Caco-2 (cell line): ENCODE measurements at regions of chr2 and their contacts with region 1.

Region 1: DNA sequence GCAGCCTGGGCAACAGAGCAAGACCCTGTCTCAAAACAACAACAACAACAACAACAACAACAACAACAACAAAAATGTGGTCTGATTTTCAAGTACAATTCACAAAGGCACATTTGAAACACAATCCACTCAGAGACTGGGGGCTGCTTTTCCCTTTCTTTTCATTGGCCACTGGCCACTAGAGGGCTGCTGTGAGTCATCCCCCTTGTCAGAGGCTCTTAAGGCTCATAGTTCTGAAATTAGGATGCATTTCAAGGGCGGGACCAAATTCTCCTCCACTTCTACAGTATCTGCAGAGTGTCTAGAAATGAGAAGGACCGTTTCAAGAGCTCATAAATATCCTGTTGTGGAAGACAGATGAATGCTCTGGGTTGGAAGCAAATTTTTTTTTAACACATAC is 285.4 kb downstream of the NRXN1 start:
- DNase-seq: peak; percentile 39 to 52
- H3K4me3 ChIP-seq: no peak overlapping the region
- H3K4me3 Mint-ChIP-seq: no peak overlapping the region
- H3K27ac Mint-ChIP-seq: no peak overlapping the region
- H3K4me1 ChIP-seq: no peaks in the 10 kb centered on the region
- H3K4me1 Mint-ChIP-seq: no peaks in the 10 kb centered on the region
- H3K27me3 ChIP-seq: no peaks in the 10 kb centered on the region
- H3K27me3 Mint-ChIP-seq: no peaks in the 10 kb centered on the region
- CTCF ChIP-seq: peak; percentile 60 to 85

Region 2: GRCh38 chr2:50535971-50536759 is 210.4 kb before region 1 on chr2:
- CTCF ChIA-PET with region 1: interaction called, 3 read pairs
- POLR2A ChIA-PET with region 1: no interaction called
- intact Hi-C with region 1: loop called (anchors 5 kb)
- DNase-seq: peak in 1 of 2 experiments; percentile 19
- H3K4me3 ChIP-seq: no peak overlapping the region
- H3K4me3 Mint-ChIP-seq: no peak overlapping the region
- H3K27ac Mint-ChIP-seq: no peak overlapping the region
- H3K4me1 ChIP-seq: no peaks in the 10 kb centered on the region
- H3K4me1 Mint-ChIP-seq: no peaks in the 10 kb centered on the region
- H3K27me3 ChIP-seq: no peaks in the 10 kb centered on the region
- H3K27me3 Mint-ChIP-seq: peaks cover 3% of the 10 kb centered on the region
- CTCF ChIP-seq: peak; percentile 31 to 57

Region 3: DNA sequence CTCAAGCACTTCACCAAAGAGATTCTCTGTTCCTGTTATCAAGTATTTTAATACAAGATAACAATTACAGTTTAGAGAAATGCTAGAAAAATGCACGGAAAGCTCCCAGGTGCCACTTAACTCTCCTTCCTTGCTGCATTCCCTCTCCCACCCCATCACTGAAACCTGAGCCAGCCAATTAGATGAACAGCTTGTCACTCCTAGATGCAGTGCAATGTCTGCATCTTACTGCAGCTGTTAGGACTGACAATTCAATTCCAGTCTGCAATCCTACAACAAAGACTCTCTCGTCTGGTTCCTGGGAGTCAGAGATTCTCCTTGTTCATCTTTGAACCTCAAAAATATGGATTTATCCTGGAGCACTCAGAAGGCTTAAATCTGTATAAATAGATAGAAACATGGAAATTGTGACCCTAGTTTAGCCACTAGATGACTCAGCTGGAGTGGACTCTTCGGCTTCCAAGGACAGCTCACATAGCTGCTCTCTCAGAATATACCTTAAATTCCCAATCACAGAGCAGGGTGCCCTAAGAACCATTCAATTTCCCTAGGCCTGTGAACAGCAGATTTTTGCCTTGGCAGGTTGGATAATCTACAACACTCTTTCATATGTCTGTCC is 25.7 kb before region 1 on chr2:
- CTCF ChIA-PET with region 1: no interaction called
- POLR2A ChIA-PET with region 1: no interaction called
- intact Hi-C with region 1: loop called (anchors 1 kb)
- DNase-seq: peak in 1 of 2 experiments; percentile 11
- H3K4me3 ChIP-seq: no peak overlapping the region
- H3K4me3 Mint-ChIP-seq: peak overlapping the region; percentile 56
- H3K27ac Mint-ChIP-seq: peak overlapping the region; percentile 83
- H3K4me1 ChIP-seq: peaks cover 22% of the 10 kb centered on the region
- H3K4me1 Mint-ChIP-seq: peaks cover 23% of the 10 kb centered on the region
- H3K27me3 ChIP-seq: no peaks in the 10 kb centered on the region
- H3K27me3 Mint-ChIP-seq: no peaks in the 10 kb centered on the region
- CTCF ChIP-seq: no peak

Region 4: GRCh38 chr2:50872543-50872942 is 126.0 kb after region 1 on chr2:
- CTCF ChIA-PET with region 1: no interaction called
- POLR2A ChIA-PET with region 1: no interaction called
- intact Hi-C with region 1: loop called (anchors 2 kb)
- DNase-seq: no peak
- H3K4me3 ChIP-seq: no peak overlapping the region
- H3K4me3 Mint-ChIP-seq: no peak overlapping the region
- H3K27ac Mint-ChIP-seq: no peak overlapping the region
- H3K4me1 ChIP-seq: no peaks in the 10 kb centered on the region
- H3K4me1 Mint-ChIP-seq: no peaks in the 10 kb centered on the region
- H3K27me3 ChIP-seq: no peaks in the 10 kb centered on the region
- H3K27me3 Mint-ChIP-seq: peaks cover 3% of the 10 kb centered on the region
- CTCF ChIP-seq: peak; percentile 20 to 61

Region 5: GRCh38 chr2:50995610-50996009 is 249.1 kb after region 1 on chr2:
- CTCF ChIA-PET with region 1: no interaction called
- POLR2A ChIA-PET with region 1: no interaction called
- intact Hi-C with region 1: loop called (anchors 10 kb)
- DNase-seq: no peak
- H3K4me3 ChIP-seq: no peak overlapping the region
- H3K4me3 Mint-ChIP-seq: no peak overlapping the region
- H3K27ac Mint-ChIP-seq: no peak overlapping the region
- H3K4me1 ChIP-seq: no peaks in the 10 kb centered on the region
- H3K4me1 Mint-ChIP-seq: no peaks in the 10 kb centered on the region
- H3K27me3 ChIP-seq: no peaks in the 10 kb centered on the region
- H3K27me3 Mint-ChIP-seq: peaks cover 2% of the 10 kb centered on the region
- CTCF ChIP-seq: no peak

Region 6: GRCh38 chr2:51247252-51247805 is 500.8 kb after region 1 on chr2:
- CTCF ChIA-PET with region 1: no interaction called
- POLR2A ChIA-PET with region 1: no interaction called
- intact Hi-C with region 1: no loop called
- DNase-seq: no peak
- H3K4me3 ChIP-seq: no peak overlapping the region
- H3K4me3 Mint-ChIP-seq: no peak overlapping the region
- H3K27ac Mint-ChIP-seq: no peak overlapping the region
- H3K4me1 ChIP-seq: no peaks in the 10 kb centered on the region
- H3K4me1 Mint-ChIP-seq: no peaks in the 10 kb centered on the region
- H3K27me3 ChIP-seq: no peaks in the 10 kb centered on the region
- H3K27me3 Mint-ChIP-seq: no peaks in the 10 kb centered on the region
- CTCF ChIP-seq: peak in 1 of 2 experiments; percentile 23